CD4-positive, alpha-beta memory T cell (primary cell): ENCODE measurements at regions of chr3 and their contacts with region 1.

Region 1: GRCh38 chr3:25648107-25648535 is 16.6 kb downstream of the TOP2B start:
- DNase-seq: peak; percentile 75 to 79 (median 78)
- H3K4me3 ChIP-seq: no peak overlapping the region
- H3K4me3 Mint-ChIP-seq: peak overlapping the region in 3 of 8 donors; percentile 0 to 4 (median 3)
- H3K27ac ChIP-seq: no peak overlapping the region
- H3K27ac Mint-ChIP-seq: peak overlapping the region; percentile 0 to 88 (median 45)
- H3K4me1 ChIP-seq: peaks cover 24% of the 10 kb centered on the region
- H3K4me1 Mint-ChIP-seq: peaks cover 26 to 57% (median 45%) of the 10 kb centered on the region in 4 donors
- H3K27me3 ChIP-seq: no peaks in the 10 kb centered on the region
- H3K27me3 Mint-ChIP-seq: no peaks in the 10 kb centered on the region

Region 2: DNA sequence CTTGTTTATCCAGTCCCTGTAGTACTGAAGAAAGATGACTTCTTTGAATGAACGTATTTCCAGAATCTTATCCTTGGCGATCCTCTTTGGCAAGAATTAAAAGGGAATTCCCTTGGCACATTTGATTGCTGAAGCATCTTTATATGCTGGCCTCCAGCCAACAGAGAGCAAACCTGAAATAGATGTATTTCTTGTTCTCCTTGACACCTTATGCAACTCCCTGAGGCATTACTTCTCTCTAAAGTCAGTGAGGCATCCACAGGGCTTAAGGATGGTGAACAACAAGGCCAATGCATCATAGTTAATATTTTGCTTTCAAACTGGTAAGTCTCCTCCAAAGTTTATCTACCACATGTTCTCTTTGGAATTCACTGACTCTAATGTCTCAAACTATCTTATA is 702.6 kb before region 1 on chr3:
- CTCF ChIA-PET with region 1: no interaction called
- POLR2A ChIA-PET with region 1: no interaction called
- intact Hi-C with region 1: no loop called
- DNase-seq: no peak
- H3K4me3 ChIP-seq: no peak overlapping the region
- H3K4me3 Mint-ChIP-seq: no peak overlapping the region
- H3K27ac ChIP-seq: no peak overlapping the region
- H3K27ac Mint-ChIP-seq: no peak overlapping the region
- H3K4me1 ChIP-seq: no peaks in the 10 kb centered on the region
- H3K4me1 Mint-ChIP-seq: no peaks in the 10 kb centered on the region
- H3K27me3 ChIP-seq: no peaks in the 10 kb centered on the region
- H3K27me3 Mint-ChIP-seq: no peaks in the 10 kb centered on the region

Region 3: DNA sequence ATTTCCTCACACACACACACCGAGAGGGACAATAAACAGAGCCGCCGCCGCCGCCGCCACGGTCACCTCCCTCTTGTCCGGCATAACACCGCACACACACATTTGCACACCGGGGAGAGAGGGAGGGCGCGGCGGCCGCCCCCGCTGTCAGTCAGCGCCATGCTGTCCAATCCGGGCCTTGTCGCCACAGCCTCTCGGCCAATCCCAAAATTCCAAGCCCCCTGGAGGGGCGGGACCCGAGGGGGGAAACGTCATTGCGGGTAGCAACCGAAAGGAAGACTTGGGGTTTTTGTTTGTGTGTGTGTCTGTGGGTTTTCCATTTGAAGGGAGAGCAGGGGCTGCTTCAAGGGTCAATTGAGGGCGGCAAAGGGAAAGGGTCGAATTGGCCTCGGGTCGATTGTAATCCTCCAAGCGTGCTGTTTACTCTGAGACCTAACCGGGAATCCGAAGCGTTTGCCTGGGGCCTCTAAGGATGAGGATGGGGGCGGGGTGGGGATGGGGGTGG is 16.7 kb after region 1 on chr3 and contains the start of gene TOP2B:
- CTCF ChIA-PET with region 1: interaction called, 29 read pairs
- POLR2A ChIA-PET with region 1: interaction called, 5 read pairs
- intact Hi-C with region 1: loop called (anchors 2 kb)
- DNase-seq: peak; percentile 94 to 97 (median 95)
- H3K4me3 ChIP-seq: peak within 1 kb of the TSS; percentile 51 to 79
- H3K4me3 Mint-ChIP-seq: peak within 1 kb of the TSS; percentile 98 to 100 (median 99)
- H3K27ac ChIP-seq: peak within 1 kb of the TSS; percentile 86
- H3K27ac Mint-ChIP-seq: peak within 1 kb of the TSS; percentile 99 to 100 (median 100)
- H3K4me1 ChIP-seq: peaks cover 45% of the 10 kb centered on the region
- H3K4me1 Mint-ChIP-seq: peaks cover 27 to 58% (median 43%) of the 10 kb centered on the region in 4 donors
- H3K27me3 ChIP-seq: no peaks in the 10 kb centered on the region
- H3K27me3 Mint-ChIP-seq: no peaks in the 10 kb centered on the region
- total RNA-seq, gene TOP2B: 161 to 175 TPM

Region 4: GRCh38 chr3:25831578-25831977 is 183.5 kb after region 1 on chr3:
- CTCF ChIA-PET with region 1: interaction called, 18 read pairs
- POLR2A ChIA-PET with region 1: no interaction called
- intact Hi-C with region 1: no loop called
- DNase-seq: no peak
- H3K4me3 ChIP-seq: no peak overlapping the region
- H3K4me3 Mint-ChIP-seq: no peak overlapping the region
- H3K27ac ChIP-seq: no peak overlapping the region
- H3K27ac Mint-ChIP-seq: no peak overlapping the region
- H3K4me1 ChIP-seq: peaks cover 4% of the 10 kb centered on the region
- H3K4me1 Mint-ChIP-seq: peaks cover 0 to 6% (median under 1%) of the 10 kb centered on the region in 4 donors
- H3K27me3 ChIP-seq: no peaks in the 10 kb centered on the region
- H3K27me3 Mint-ChIP-seq: peaks cover 2 to 6% of the 10 kb centered on the region in 2 donors

Region 5: DNA sequence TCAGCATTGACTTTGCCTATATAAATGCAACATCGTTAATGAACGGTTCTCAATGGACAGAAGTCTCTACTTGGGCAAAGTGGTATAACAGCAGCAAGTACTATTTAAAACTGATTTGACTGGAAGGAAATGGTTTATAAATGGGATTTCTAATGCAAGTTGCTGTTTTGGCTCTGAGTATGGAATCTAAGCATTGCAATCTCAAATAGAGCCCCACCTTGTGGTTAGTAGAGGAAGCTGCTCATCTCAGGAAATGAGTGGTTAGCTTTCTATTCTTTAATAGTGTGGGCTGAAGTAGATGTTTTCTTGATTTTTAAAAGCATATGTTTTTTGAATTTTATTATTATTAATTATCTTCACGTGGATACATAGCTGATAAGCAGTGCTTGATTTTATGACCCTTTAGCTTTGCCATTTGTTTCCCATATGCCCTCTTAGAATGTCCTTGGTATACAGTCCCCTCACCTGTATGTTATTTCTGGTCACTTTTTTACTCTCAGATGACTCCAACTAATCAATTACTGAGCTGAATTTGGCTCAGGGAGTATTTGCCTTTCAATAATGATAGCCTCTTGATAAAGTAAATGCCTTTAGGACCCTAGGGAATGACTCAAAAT is 208.9 kb after region 1 on chr3:
- CTCF ChIA-PET with region 1: interaction called, 191 read pairs
- POLR2A ChIA-PET with region 1: interaction called, 3 read pairs
- intact Hi-C with region 1: loop called (anchors 1 kb)
- DNase-seq: peak in 4 of 5 donors; percentile 39 to 50 (median 46)
- H3K4me3 ChIP-seq: no peak overlapping the region
- H3K4me3 Mint-ChIP-seq: no peak overlapping the region
- H3K27ac ChIP-seq: no peak overlapping the region
- H3K27ac Mint-ChIP-seq: no peak overlapping the region
- H3K4me1 ChIP-seq: no peaks in the 10 kb centered on the region
- H3K4me1 Mint-ChIP-seq: peaks cover 0 to 4% (median under 1%) of the 10 kb centered on the region in 4 donors
- H3K27me3 ChIP-seq: no peaks in the 10 kb centered on the region
- H3K27me3 Mint-ChIP-seq: no peaks in the 10 kb centered on the region

Region 6: DNA sequence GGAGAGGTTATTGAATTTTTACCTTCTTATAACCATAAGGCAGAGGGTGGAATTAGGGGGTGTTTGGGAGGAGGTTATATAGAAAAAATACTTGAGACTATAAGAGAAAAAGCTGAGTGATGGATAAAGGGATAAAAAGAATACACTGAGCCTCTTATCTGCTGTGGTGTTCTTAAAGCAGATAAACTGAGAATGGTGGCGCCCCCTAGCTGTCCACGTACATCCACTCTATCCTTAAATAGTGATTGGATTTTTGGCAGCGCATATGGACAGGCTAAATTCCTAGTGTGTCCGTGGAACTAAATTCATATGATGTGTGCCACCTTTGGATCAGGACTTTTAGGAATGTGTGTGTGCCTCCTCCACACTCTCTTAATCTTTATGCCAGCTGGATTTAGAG is 262.9 kb after region 1 on chr3:
- CTCF ChIA-PET with region 1: interaction called, 7 read pairs
- POLR2A ChIA-PET with region 1: no interaction called
- intact Hi-C with region 1: loop called (anchors 1 kb)
- DNase-seq: peak in 4 of 5 donors; percentile 11 to 27 (median 22)
- H3K4me3 ChIP-seq: no peak overlapping the region
- H3K4me3 Mint-ChIP-seq: peak overlapping the region in 4 of 8 donors; percentile 13 to 68 (median 43)
- H3K27ac ChIP-seq: no peak overlapping the region
- H3K27ac Mint-ChIP-seq: peak overlapping the region; percentile 56 to 98 (median 96)
- H3K4me1 ChIP-seq: peaks cover 14% of the 10 kb centered on the region
- H3K4me1 Mint-ChIP-seq: peaks cover 11 to 35% (median 21%) of the 10 kb centered on the region in 4 donors
- H3K27me3 ChIP-seq: no peaks in the 10 kb centered on the region
- H3K27me3 Mint-ChIP-seq: peaks cover 0 to 2% of the 10 kb centered on the region in 2 donors